Caco-2 (cell line): ENCODE measurements at regions of chr11 and their contacts with region 1.

Region 1: GRCh38 chr11:63838678-63839507 is at the start of gene MARK2:
- DNase-seq: peak; percentile 98 to 100
- H3K4me3 ChIP-seq: peak within 1 kb of the TSS; percentile 93
- H3K4me3 Mint-ChIP-seq: peak within 1 kb of the TSS; percentile 94
- H3K27ac Mint-ChIP-seq: peak within 1 kb of the TSS; percentile 76
- H3K4me1 ChIP-seq: peaks cover 40% of the 10 kb centered on the region
- H3K4me1 Mint-ChIP-seq: peaks cover 45% of the 10 kb centered on the region
- H3K27me3 ChIP-seq: no peaks in the 10 kb centered on the region
- H3K27me3 Mint-ChIP-seq: no peaks in the 10 kb centered on the region
- CTCF ChIP-seq: no peak
- total RNA-seq, gene MARK2: 63.5 and 64.5 TPM in 2 replicates

Region 2: DNA sequence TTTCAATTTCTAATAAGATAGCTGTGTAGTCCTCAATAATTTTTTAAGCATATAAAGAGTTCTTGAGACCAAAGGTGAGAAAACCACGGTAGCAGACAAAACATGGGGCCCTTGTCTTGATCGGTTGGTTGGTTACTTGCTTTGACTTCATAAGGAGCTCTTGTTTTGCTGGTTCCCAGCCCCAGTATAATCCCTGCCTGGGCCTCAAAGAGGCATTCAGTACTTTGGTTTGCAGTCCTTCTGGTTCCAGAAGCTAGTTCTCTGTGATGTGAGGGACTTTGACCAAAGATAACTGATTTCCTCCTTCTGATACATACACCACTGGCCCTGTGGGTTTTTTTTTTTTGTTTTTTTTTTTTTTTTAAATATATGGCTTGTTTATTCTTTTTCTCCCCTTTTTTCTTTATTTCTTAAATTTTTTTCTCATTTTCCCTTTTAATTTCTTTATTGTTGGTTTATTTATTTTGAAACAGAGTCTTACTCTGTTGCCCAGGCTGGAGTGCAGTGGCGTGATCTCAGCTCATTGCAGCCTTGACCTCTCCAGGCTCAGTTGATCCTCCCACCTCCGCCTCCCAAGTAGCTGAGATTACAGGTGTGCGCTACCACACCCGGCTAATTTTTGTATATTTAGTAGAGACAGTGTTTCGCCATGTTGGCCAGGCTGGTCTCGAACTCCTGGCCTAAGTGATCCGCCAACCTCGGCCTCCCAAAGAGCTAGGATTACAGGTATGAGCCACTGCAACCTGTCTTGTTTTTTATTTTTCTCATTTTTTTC is 17.3 kb after region 1 on chr11:
- CTCF ChIA-PET with region 1: interaction called, 9 read pairs
- POLR2A ChIA-PET with region 1: interaction called, 9 read pairs
- intact Hi-C with region 1: loop called (anchors 2 kb)
- DNase-seq: peak; percentile 79 to 83
- H3K4me3 ChIP-seq: no peak overlapping the region
- H3K4me3 Mint-ChIP-seq: peak overlapping the region; percentile 16
- H3K27ac Mint-ChIP-seq: peak overlapping the region; percentile 80
- H3K4me1 ChIP-seq: peaks cover 48% of the 10 kb centered on the region
- H3K4me1 Mint-ChIP-seq: peaks cover 20% of the 10 kb centered on the region
- H3K27me3 ChIP-seq: no peaks in the 10 kb centered on the region
- H3K27me3 Mint-ChIP-seq: no peaks in the 10 kb centered on the region
- CTCF ChIP-seq: no peak

Region 3: DNA sequence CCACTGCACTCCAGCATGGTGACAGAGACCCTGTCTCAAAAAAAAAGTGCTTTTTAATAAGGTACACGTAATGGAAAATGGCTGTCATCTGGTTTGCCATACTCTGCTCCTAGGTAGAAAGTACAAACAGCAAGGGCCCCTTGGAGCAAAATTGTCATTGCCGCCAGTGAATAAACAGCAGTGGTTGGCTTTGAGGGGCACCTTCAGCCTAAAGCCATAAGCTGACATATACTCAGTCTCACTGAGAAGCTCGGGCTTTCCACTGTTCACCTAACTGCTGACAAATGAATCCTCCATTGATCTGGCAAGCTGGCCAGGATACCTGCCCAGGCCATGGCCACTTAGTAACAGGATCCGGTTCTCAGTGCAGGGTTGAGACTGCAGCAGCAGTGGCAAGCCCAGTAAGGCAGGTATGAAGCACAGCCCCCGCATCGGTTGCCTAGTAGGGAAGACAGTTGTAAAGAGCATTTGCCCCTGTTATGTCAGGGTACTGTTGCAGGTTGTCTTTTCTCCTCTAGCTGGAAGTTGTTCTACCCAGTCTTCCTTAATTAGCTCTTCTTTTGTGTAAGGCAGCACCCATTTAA is 38.9 kb after region 1 on chr11:
- CTCF ChIA-PET with region 1: interaction called, 32 read pairs
- POLR2A ChIA-PET with region 1: interaction called, 11 read pairs
- intact Hi-C with region 1: loop called (anchors 1 kb)
- DNase-seq: no peak
- H3K4me3 ChIP-seq: no peak overlapping the region
- H3K4me3 Mint-ChIP-seq: no peak overlapping the region
- H3K27ac Mint-ChIP-seq: no peak overlapping the region
- H3K4me1 ChIP-seq: no peaks in the 10 kb centered on the region
- H3K4me1 Mint-ChIP-seq: peaks cover 8% of the 10 kb centered on the region
- H3K27me3 ChIP-seq: no peaks in the 10 kb centered on the region
- H3K27me3 Mint-ChIP-seq: no peaks in the 10 kb centered on the region
- CTCF ChIP-seq: no peak

Region 4: DNA sequence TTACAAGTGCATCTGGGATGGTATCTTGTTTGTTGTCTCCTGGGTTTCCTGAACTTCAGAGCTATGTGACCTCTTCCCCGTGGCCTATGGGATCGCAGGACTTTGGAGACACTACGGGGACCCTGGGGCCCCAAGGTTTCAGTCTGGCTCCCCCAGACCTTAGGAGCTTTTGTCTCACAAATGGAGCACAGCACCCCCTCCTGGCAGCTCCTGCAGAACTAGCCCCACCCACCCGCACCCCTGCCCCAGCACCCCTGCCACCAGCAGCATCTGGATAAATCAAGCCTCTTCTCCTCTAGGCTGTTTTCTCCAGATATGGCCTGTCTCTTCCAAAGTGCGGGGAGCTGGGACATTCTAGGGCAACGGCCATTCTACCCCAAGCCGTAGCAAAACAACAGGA is 67.7 kb after region 1 on chr11:
- CTCF ChIA-PET with region 1: interaction called, 7 read pairs
- POLR2A ChIA-PET with region 1: no interaction called
- intact Hi-C with region 1: loop called (anchors 1 kb)
- DNase-seq: peak in 1 of 2 experiments; percentile 46
- H3K4me3 ChIP-seq: no peak overlapping the region
- H3K4me3 Mint-ChIP-seq: no peak overlapping the region
- H3K27ac Mint-ChIP-seq: no peak overlapping the region
- H3K4me1 ChIP-seq: 0 out of 2 replicates have a peak, but pooled peaks cover 5% of the 10 kb centered on the region
- H3K4me1 Mint-ChIP-seq: no peaks in the 10 kb centered on the region
- H3K27me3 ChIP-seq: no peaks in the 10 kb centered on the region
- H3K27me3 Mint-ChIP-seq: no peaks in the 10 kb centered on the region
- CTCF ChIP-seq: peak; percentile 31 to 33

Region 5: GRCh38 chr11:63945477-63946163 is 106.7 kb after region 1 on chr11:
- CTCF ChIA-PET with region 1: interaction called, 67 read pairs
- POLR2A ChIA-PET with region 1: no interaction called
- intact Hi-C with region 1: loop called (anchors 1 kb)
- DNase-seq: peak; percentile 66 to 78
- H3K4me3 ChIP-seq: no peak overlapping the region
- H3K4me3 Mint-ChIP-seq: no peak overlapping the region
- H3K27ac Mint-ChIP-seq: no peak overlapping the region
- H3K4me1 ChIP-seq: peaks cover 4% of the 10 kb centered on the region; the same call in 1 of the 2 replicates
- H3K4me1 Mint-ChIP-seq: peaks cover 2% of the 10 kb centered on the region
- H3K27me3 ChIP-seq: no peaks in the 10 kb centered on the region
- H3K27me3 Mint-ChIP-seq: no peaks in the 10 kb centered on the region
- CTCF ChIP-seq: peak; percentile 67 to 70

Region 6: DNA sequence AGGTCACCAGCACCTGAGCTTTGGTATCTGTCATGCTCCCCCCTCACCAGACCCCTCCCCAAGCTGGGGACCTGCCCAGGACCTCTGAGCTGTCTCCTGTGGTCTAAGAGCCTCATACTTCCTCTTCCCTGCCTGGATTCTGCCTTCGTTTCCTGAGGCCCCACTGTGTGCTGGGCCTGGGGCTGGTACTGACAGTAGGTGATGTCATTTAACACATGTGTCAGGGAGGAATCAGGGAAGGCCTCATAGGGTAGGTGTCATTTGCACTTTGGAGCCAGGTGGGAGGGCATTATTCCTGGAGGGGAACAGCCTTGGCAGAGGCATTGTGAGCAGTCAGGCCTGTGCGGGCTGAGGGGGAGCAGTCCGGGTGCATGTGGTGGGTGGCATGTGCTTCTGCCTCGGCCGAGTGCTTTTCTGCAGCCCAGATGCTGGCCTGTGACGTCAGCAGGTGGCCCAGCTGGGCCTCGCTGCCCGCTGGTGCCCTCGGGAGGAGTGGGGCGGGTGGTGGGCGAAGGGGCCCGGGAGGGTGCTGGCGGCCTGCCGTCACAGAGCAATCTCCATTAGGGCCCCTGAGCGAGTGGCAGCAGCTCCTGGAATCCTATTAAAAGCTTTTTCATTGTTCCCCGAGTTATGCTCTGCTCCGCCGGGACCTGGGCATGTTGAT is 206.0 kb after region 1 on chr11:
- CTCF ChIA-PET with region 1: no interaction called
- POLR2A ChIA-PET with region 1: no interaction called
- intact Hi-C with region 1: no loop called
- DNase-seq: no peak
- H3K4me3 ChIP-seq: no peak overlapping the region
- H3K4me3 Mint-ChIP-seq: no peak overlapping the region
- H3K27ac Mint-ChIP-seq: no peak overlapping the region
- H3K4me1 ChIP-seq: peaks cover 13% of the 10 kb centered on the region
- H3K4me1 Mint-ChIP-seq: peaks cover 7% of the 10 kb centered on the region
- H3K27me3 ChIP-seq: no peaks in the 10 kb centered on the region
- H3K27me3 Mint-ChIP-seq: no peaks in the 10 kb centered on the region
- CTCF ChIP-seq: no peak